Activated naive CD4-positive, alpha-beta T cell treated with anti-CD3 and anti-CD28 coated beads for 36 hours (primary cell): ENCODE measurements at regions of chr1 and their contacts with region 1.

Region 1: GRCh38 chr1:26999440-26999987 is 6.0 kb downstream of the TRNP1 start:
- DNase-seq: no peak
- H3K4me3 Mint-ChIP-seq: no peak overlapping the region
- H3K27ac Mint-ChIP-seq: no peak overlapping the region
- H3K4me1 Mint-ChIP-seq: peaks cover 6% of the 10 kb centered on the region
- H3K27me3 Mint-ChIP-seq: peaks cover 26% of the 10 kb centered on the region

Region 2: GRCh38 chr1:26666855-26667254 is 332.7 kb before region 1 on chr1:
- CTCF ChIA-PET with region 1: no interaction called
- intact Hi-C with region 1: no loop called
- DNase-seq: peak; percentile 38
- H3K4me3 Mint-ChIP-seq: no peak overlapping the region
- H3K27ac Mint-ChIP-seq: no peak overlapping the region
- H3K4me1 Mint-ChIP-seq: peaks cover 7% of the 10 kb centered on the region
- H3K27me3 Mint-ChIP-seq: no peaks in the 10 kb centered on the region

Region 3: DNA sequence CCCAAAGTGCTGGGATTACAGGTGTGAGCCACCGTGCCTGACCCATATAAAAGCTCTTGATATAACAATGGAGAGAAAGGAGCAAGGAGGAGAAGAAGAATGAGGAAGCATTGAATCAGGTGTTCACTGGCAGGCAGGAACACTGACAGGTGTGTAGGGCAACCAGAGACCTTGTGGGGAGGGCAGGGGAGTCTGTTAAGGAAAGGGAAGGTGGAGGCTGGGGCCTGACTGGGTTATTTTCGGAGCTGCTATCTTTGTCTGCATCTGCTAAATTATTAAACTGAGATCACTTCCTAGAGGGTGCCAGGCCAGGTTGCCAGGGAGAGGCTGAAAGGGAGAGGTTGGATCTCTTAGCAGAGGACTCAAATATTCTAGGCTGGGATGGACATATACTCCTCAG is 12.9 kb before region 1 on chr1:
- CTCF ChIA-PET with region 1: interaction called, 21 read pairs
- intact Hi-C with region 1: no loop called
- DNase-seq: no peak
- H3K4me3 Mint-ChIP-seq: no peak overlapping the region
- H3K27ac Mint-ChIP-seq: no peak overlapping the region
- H3K4me1 Mint-ChIP-seq: peaks cover 5% of the 10 kb centered on the region
- H3K27me3 Mint-ChIP-seq: peaks cover 21% of the 10 kb centered on the region

Region 4: DNA sequence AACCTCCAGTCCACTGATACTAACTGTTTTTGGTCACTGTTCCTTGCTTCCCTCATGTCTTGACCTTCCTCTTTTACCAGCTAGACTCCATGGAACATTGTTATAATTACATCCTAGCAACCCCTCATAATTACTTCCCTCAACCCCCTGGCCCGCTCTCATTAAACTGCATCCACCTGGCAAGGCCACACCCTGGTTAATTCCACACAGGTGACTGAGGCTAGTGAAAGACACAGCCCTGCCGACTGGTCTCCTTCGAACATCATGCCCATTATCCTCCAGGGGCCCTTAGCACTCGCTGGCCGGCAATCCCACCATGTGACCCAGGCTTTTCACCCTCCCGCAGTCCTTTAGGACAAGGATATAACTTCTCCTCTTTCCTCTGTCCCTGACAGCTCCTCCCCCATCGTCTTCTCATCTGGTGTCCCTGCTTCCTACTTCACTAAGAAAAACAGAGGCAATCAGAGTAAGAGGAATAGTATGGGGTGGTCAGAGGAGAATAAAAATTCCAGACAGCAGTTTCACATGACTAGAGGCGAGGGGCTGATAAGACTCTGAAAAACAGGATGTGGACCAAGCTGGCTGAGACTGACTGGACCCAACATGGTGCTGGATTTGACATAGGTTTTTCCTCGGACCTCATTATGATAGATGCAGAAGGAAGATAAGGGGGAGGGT is 22.0 kb after region 1 on chr1:
- CTCF ChIA-PET with region 1: interaction called, 16 read pairs
- intact Hi-C with region 1: no loop called
- DNase-seq: no peak
- H3K4me3 Mint-ChIP-seq: no peak overlapping the region
- H3K27ac Mint-ChIP-seq: no peak overlapping the region
- H3K4me1 Mint-ChIP-seq: no peaks in the 10 kb centered on the region
- H3K27me3 Mint-ChIP-seq: no peaks in the 10 kb centered on the region

Region 5: GRCh38 chr1:27097484-27097917 is 98.0 kb after region 1 on chr1:
- CTCF ChIA-PET with region 1: interaction called, 9 read pairs
- intact Hi-C with region 1: loop called (anchors 1 kb)
- DNase-seq: peak; percentile 86
- H3K4me3 Mint-ChIP-seq: no peak overlapping the region
- H3K27ac Mint-ChIP-seq: no peak overlapping the region
- H3K4me1 Mint-ChIP-seq: peaks cover 7% of the 10 kb centered on the region
- H3K27me3 Mint-ChIP-seq: no peaks in the 10 kb centered on the region